ENCODE measurements at regions of chr12 and their contacts with region 1.

Region 1: DNA sequence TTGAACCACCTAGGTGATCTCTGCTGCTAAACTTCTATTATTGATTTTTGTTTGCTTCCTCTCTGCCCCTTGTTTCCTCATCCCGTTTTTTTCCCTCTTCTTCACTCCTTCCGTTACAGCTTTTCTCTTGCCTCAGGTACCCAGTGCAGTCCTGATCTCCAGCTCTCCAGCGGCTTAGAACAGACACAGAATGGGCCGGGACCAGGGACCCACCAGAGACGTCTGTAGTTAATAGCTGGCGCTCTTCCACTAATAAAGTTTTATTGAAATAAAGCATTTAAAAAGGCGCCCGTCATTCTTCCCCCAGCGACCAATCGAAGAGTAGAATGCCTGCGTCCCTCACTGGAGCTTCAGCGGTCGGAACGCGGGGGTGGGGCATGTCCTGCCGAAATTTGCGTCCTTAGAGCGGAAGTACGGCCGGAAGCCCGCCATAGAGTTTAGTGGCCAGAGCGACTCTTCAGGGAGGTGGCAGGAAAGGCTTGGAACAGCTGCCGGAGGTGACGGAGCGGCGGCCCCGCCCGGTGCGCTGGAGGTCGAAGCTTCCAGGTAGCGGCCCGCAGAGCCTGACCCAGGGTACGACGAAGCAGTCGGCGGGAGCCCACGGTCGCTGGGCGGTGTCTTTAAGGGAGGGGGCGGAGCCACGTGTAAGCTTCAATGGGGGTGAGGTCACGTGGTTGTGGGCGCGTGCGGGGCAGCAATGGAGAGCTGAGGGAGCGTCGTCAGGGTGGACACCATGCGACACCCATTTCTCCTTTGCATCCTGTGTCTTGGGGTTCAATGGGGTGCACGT is at the start of gene COPS7A:
- DNase-seq: peak; percentile 99
- H3K4me3 ChIP-seq: peak within 1 kb of the TSS; percentile 44
- H3K27ac ChIP-seq: peak within 1 kb of the TSS; percentile 80
- H3K4me1 ChIP-seq: peaks cover 6% of the 10 kb centered on the region
- H3K27me3 ChIP-seq: no peaks in the 10 kb centered on the region
- CTCF ChIP-seq: no peak
- total RNA-seq, gene COPS7A: 33.3 to 47.6 TPM

Region 2: DNA sequence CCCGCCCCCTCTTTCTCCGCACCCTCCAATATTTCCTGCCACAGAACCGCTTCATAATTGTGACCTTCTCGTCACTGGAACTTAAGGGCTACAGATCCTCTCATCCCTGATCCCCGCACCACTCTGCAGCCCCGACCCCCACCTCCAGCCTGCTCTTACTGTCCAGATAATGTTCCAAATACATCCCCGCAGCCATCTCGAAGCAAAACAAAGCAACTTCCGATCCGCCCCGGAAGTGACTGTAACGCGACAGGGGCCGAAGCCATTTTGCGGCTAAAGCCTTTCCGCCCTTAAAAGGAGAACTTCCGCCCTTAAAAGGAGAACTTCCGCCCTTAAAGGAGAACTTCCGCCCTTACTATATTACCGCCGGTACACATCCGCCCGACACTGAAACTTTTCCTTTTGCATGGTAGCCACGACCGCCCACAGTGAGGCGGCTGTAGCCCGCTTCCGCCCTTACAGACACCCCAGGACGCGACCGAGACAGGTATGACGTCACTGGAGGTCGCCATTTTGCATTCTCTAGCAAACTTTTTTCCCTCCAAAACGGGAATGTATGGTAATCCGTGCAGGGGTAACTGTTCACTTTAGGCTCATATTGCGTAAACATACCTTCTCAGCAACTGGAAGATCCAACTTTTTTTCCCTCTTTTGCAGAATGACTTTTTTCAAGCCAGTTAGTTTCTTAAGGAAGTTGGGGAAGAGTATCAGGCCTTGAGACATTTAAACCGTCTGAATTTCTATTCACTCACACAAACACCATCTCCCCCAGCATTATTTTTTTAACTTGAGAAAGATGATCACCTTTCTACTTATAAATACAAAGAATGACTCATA is 60.7 kb before region 1 on chr12 and contains the start of gene ING4:
- intact Hi-C with region 1: loop called (anchors 5 kb)
- DNase-seq: peak; percentile 97
- H3K4me3 ChIP-seq: peak within 1 kb of the TSS; percentile 69
- H3K27ac ChIP-seq: peak within 1 kb of the TSS; percentile 45
- H3K4me1 ChIP-seq: no peaks in the 10 kb centered on the region
- H3K27me3 ChIP-seq: no peaks in the 10 kb centered on the region
- CTCF ChIP-seq: no peak
- total RNA-seq, gene ING4: 20.0 to 33.8 TPM